Activated naive CD4-positive, alpha-beta T cell treated with anti-CD3 and anti-CD28 coated beads for 36 hours (primary cell): ENCODE measurements at regions of chr5 and their contacts with region 1.

Region 1: GRCh38 chr5:118987988-118988865 is at the start of gene DTWD2:
- DNase-seq: peak; percentile 92
- H3K4me3 Mint-ChIP-seq: peak within 1 kb of the TSS; percentile 76
- H3K27ac Mint-ChIP-seq: peak within 1 kb of the TSS; percentile 63
- H3K4me1 Mint-ChIP-seq: peaks cover 22% of the 10 kb centered on the region
- H3K27me3 Mint-ChIP-seq: no peaks in the 10 kb centered on the region
- total RNA-seq, gene DTWD2: 4.0 to 5.5 TPM

Region 2: DNA sequence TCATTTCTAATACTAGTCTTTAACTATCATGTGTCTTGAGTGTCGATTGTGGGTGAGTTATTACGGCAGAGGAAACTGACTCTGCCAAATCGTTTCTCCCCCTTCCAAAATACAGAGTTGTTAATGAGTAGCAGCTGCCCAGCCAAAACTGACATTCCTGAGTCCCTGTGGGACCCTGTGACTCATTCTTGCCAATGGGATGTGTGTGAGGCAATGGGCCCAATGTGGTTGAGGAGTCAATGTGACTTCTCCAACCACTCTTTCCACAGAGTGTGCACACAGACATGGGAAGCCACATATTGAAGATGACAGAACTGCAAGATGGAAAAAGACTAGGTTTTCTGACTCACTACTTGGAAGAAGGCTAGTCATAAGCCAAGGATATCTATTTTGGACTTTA is 434.6 kb before region 1 on chr5:
- CTCF ChIA-PET with region 1: no interaction called
- intact Hi-C with region 1: no loop called
- DNase-seq: no peak
- H3K4me3 Mint-ChIP-seq: no peak overlapping the region
- H3K27ac Mint-ChIP-seq: no peak overlapping the region
- H3K4me1 Mint-ChIP-seq: no peaks in the 10 kb centered on the region
- H3K27me3 Mint-ChIP-seq: no peaks in the 10 kb centered on the region

Region 3: GRCh38 chr5:119022017-119022745 is 34.0 kb after region 1 on chr5:
- CTCF ChIA-PET with region 1: interaction called, 8 read pairs
- intact Hi-C with region 1: loop called (anchors 1 kb)
- DNase-seq: no peak
- H3K4me3 Mint-ChIP-seq: no peak overlapping the region
- H3K27ac Mint-ChIP-seq: no peak overlapping the region
- H3K4me1 Mint-ChIP-seq: peaks cover 5% of the 10 kb centered on the region
- H3K27me3 Mint-ChIP-seq: no peaks in the 10 kb centered on the region

Region 4: DNA sequence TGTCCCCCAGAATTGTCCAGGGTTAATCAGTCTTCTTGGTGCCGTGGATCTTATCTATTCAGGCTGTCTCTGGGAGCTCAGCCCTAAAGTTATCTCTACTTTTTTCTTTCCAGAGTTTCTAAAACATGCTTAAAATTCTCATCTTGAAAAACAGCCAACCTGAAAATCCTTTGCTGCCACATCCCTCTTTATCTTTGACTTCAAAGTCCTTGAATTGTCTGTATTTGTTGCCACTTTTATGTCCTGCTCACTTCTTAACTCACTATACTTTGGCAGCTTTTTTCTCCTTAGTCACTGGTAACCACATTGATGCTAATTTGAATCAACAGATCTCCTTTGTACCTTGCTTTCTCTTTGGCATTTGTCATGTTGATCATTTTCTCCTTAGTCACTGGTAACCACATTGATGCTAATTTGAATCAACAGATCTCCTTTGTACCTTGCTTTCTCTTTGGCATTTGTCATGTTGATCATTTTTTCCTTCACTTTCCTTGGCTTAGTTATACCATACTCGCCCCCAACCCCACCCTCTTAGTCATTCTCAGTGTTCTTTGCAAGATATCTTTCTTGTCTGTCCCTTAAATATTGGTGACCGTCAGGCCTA is 91.2 kb after region 1 on chr5:
- CTCF ChIA-PET with region 1: interaction called, 15 read pairs
- intact Hi-C with region 1: no loop called
- DNase-seq: peak; percentile 59
- H3K4me3 Mint-ChIP-seq: no peak overlapping the region
- H3K27ac Mint-ChIP-seq: peak overlapping the region; percentile 54
- H3K4me1 Mint-ChIP-seq: peaks cover 52% of the 10 kb centered on the region
- H3K27me3 Mint-ChIP-seq: no peaks in the 10 kb centered on the region

Region 5: GRCh38 chr5:119274767-119275130 is 286.5 kb after region 1 on chr5:
- CTCF ChIA-PET with region 1: interaction called, 9 read pairs
- intact Hi-C with region 1: loop called (anchors 1 kb)
- DNase-seq: peak; percentile 50
- H3K4me3 Mint-ChIP-seq: peak overlapping the region; percentile 72
- H3K27ac Mint-ChIP-seq: peak overlapping the region; percentile 97
- H3K4me1 Mint-ChIP-seq: peaks cover 88% of the 10 kb centered on the region
- H3K27me3 Mint-ChIP-seq: no peaks in the 10 kb centered on the region

Region 6: GRCh38 chr5:119355685-119356611 is 367.7 kb after region 1 on chr5 and contains the start of gene TNFAIP8:
- CTCF ChIA-PET with region 1: interaction called, 4 read pairs
- intact Hi-C with region 1: loop called (anchors 5 kb)
- DNase-seq: peak; percentile 91
- H3K4me3 Mint-ChIP-seq: peak within 1 kb of the TSS; percentile 98
- H3K27ac Mint-ChIP-seq: peak within 1 kb of the TSS; percentile 98
- H3K4me1 Mint-ChIP-seq: peaks cover 67% of the 10 kb centered on the region
- H3K27me3 Mint-ChIP-seq: no peaks in the 10 kb centered on the region
- total RNA-seq, gene TNFAIP8: 141 to 142 TPM

Region 7: GRCh38 chr5:119743927-119744326 is 755.7 kb after region 1 on chr5:
- CTCF ChIA-PET with region 1: interaction called, 3 read pairs
- intact Hi-C with region 1: loop called (anchors 1 kb)
- DNase-seq: peak; percentile 22
- H3K4me3 Mint-ChIP-seq: no peak overlapping the region
- H3K27ac Mint-ChIP-seq: no peak overlapping the region
- H3K4me1 Mint-ChIP-seq: no peaks in the 10 kb centered on the region
- H3K27me3 Mint-ChIP-seq: peaks cover 3% of the 10 kb centered on the region